B cell (primary cell): ENCODE measurements at regions of chrX and their contacts with region 1.

Region 1: GRCh38 chrX:37745354-37745753 is 34.5 kb upstream of the CYBB start:
- DNase-seq: peak; percentile 81
- ATAC-seq: peak; percentile 75
- H3K4me3 ChIP-seq: no peak overlapping the region
- H3K4me3 Mint-ChIP-seq: peak overlapping the region; percentile 67
- H3K27ac ChIP-seq: peak overlapping the region; percentile 50 to 70
- H3K27ac Mint-ChIP-seq: peak overlapping the region; percentile 88
- H3K4me1 ChIP-seq: peaks cover 20 to 24% of the 10 kb centered on the region in 2 donors
- H3K4me1 Mint-ChIP-seq: peaks cover 21% of the 10 kb centered on the region
- H3K27me3 ChIP-seq: no peaks in the 10 kb centered on the region
- H3K27me3 Mint-ChIP-seq: no peaks in the 10 kb centered on the region
- CTCF ChIP-seq: peak; percentile 73

Region 2: GRCh38 chrX:37441377-37441776 is 304.0 kb before region 1 on chrX:
- CTCF ChIA-PET with region 1: no interaction called
- POLR2A ChIA-PET with region 1: no interaction called
- intact Hi-C with region 1: no loop called
- DNase-seq: no peak
- ATAC-seq: no peak
- H3K4me3 ChIP-seq: no peak overlapping the region
- H3K4me3 Mint-ChIP-seq: no peak overlapping the region
- H3K27ac ChIP-seq: no peak overlapping the region
- H3K27ac Mint-ChIP-seq: no peak overlapping the region
- H3K4me1 ChIP-seq: no peaks in the 10 kb centered on the region
- H3K4me1 Mint-ChIP-seq: no peaks in the 10 kb centered on the region
- H3K27me3 ChIP-seq: no peaks in the 10 kb centered on the region
- H3K27me3 Mint-ChIP-seq: no peaks in the 10 kb centered on the region
- CTCF ChIP-seq: no peak

Region 3: DNA sequence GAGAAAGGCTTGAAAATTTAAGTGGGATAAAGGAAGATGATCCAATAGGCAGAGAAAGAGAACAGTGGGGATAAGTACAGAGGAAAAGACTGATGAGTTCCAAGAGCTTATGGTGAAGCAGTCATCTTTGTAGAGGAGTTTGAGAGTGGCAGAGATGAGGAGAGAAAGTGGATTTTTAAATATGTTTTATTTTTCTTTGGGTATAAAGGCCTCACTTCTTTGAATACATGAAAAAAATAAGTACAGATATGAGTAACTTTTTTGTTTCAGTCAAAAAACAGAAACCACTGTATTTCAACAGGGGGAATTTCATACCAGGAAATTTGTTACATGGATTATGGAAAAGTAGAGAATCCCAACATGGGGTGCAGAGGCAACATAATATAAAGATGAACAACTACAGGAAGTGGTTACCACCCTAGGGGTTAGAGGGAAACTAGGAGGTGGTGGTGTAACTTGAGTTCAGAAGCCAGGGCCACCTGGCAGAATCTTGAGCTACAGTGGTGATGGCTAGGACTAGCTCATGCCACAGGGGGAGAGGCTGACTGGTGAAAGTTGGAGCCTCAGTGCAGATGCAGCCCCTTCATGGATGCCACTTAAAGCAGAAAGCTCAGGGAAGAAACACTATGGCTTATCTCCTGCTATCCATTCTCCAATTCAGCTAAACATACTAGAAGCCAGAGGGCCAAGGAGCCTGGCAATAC is 31.1 kb after region 1 on chrX:
- CTCF ChIA-PET with region 1: interaction called, 65 read pairs
- POLR2A ChIA-PET with region 1: interaction called, 9 read pairs
- intact Hi-C with region 1: no loop called
- DNase-seq: peak; percentile 50
- ATAC-seq: peak; percentile 66
- H3K4me3 ChIP-seq: peak overlapping the region in 1 of 5 experiments; percentile 9
- H3K4me3 Mint-ChIP-seq: peak overlapping the region; percentile 60
- H3K27ac ChIP-seq: peak overlapping the region; percentile 84
- H3K27ac Mint-ChIP-seq: peak overlapping the region; percentile 89
- H3K4me1 ChIP-seq: peaks cover 29 to 36% of the 10 kb centered on the region in 2 donors
- H3K4me1 Mint-ChIP-seq: peaks cover 34% of the 10 kb centered on the region
- H3K27me3 ChIP-seq: no peaks in the 10 kb centered on the region
- H3K27me3 Mint-ChIP-seq: no peaks in the 10 kb centered on the region
- CTCF ChIP-seq: no peak

Region 4: GRCh38 chrX:37796805-37797204 is 51.5 kb after region 1 on chrX:
- CTCF ChIA-PET with region 1: interaction called, 23 read pairs
- POLR2A ChIA-PET with region 1: no interaction called
- intact Hi-C with region 1: no loop called
- DNase-seq: peak; percentile 76
- ATAC-seq: peak; percentile 90
- H3K4me3 ChIP-seq: peak overlapping the region in 1 of 5 experiments; percentile 21
- H3K4me3 Mint-ChIP-seq: peak overlapping the region; percentile 42
- H3K27ac ChIP-seq: peak overlapping the region in 1 of 2 donors; percentile 61
- H3K27ac Mint-ChIP-seq: peak overlapping the region; percentile 76
- H3K4me1 ChIP-seq: peaks cover 53 to 60% of the 10 kb centered on the region in 2 donors
- H3K4me1 Mint-ChIP-seq: peaks cover 67% of the 10 kb centered on the region
- H3K27me3 ChIP-seq: no peaks in the 10 kb centered on the region
- H3K27me3 Mint-ChIP-seq: no peaks in the 10 kb centered on the region
- CTCF ChIP-seq: no peak

Region 5: DNA sequence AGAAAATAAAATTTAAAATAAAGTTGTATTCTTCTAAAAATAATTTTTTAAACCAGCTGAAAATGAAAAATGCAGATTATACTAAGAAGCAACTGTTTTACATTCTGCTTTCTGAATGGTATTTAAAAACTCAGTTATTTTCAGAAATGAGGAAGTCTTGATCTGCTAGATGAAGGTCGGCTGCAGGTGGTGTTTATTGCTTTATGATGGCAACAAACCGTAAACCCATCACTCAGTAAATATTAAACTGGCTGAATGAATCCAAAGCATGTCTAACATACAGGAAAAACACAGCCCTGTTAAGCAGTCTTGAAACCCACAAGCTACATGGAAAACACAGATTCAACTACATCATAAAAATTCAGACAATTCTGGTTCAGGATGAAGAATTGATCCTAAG is 72.7 kb after region 1 on chrX:
- CTCF ChIA-PET with region 1: interaction called, 279 read pairs
- POLR2A ChIA-PET with region 1: interaction called, 18 read pairs
- intact Hi-C with region 1: no loop called
- DNase-seq: peak; percentile 67
- ATAC-seq: peak; percentile 66
- H3K4me3 ChIP-seq: peak overlapping the region; percentile 35 to 53 (median 44)
- H3K4me3 Mint-ChIP-seq: peak overlapping the region; percentile 86
- H3K27ac ChIP-seq: peak overlapping the region; percentile 89 to 90
- H3K27ac Mint-ChIP-seq: peak overlapping the region; percentile 99
- H3K4me1 ChIP-seq: peaks cover 53 to 58% of the 10 kb centered on the region in 2 donors
- H3K4me1 Mint-ChIP-seq: peaks cover 73% of the 10 kb centered on the region
- H3K27me3 ChIP-seq: no peaks in the 10 kb centered on the region
- H3K27me3 Mint-ChIP-seq: no peaks in the 10 kb centered on the region
- CTCF ChIP-seq: no peak

Region 6: GRCh38 chrX:37830371-37830770 is 85.0 kb after region 1 on chrX:
- CTCF ChIA-PET with region 1: interaction called, 279 read pairs
- POLR2A ChIA-PET with region 1: interaction called, 18 read pairs
- intact Hi-C with region 1: loop called (anchors 1 kb)
- DNase-seq: no peak
- ATAC-seq: no peak
- H3K4me3 ChIP-seq: no peak overlapping the region
- H3K4me3 Mint-ChIP-seq: no peak overlapping the region
- H3K27ac ChIP-seq: no peak overlapping the region
- H3K27ac Mint-ChIP-seq: no peak overlapping the region
- H3K4me1 ChIP-seq: peaks cover under 1 to 6% of the 10 kb centered on the region in 2 donors
- H3K4me1 Mint-ChIP-seq: peaks cover 13% of the 10 kb centered on the region
- H3K27me3 ChIP-seq: peaks cover 0 to 2% (median 0%) of the 10 kb centered on the region in 4 experiments
- H3K27me3 Mint-ChIP-seq: no peaks in the 10 kb centered on the region
- CTCF ChIP-seq: no peak

Region 7: GRCh38 chrX:37905436-37906147 is 160.2 kb after region 1 on chrX:
- CTCF ChIA-PET with region 1: no interaction called
- POLR2A ChIA-PET with region 1: no interaction called
- intact Hi-C with region 1: no loop called
- DNase-seq: peak; percentile 2
- ATAC-seq: no peak
- H3K4me3 ChIP-seq: no peak overlapping the region
- H3K4me3 Mint-ChIP-seq: no peak overlapping the region
- H3K27ac ChIP-seq: no peak overlapping the region
- H3K27ac Mint-ChIP-seq: no peak overlapping the region
- H3K4me1 ChIP-seq: no peaks in the 10 kb centered on the region
- H3K4me1 Mint-ChIP-seq: no peaks in the 10 kb centered on the region
- H3K27me3 ChIP-seq: peaks cover 0 to 7% (median 4%) of the 10 kb centered on the region in 4 experiments
- H3K27me3 Mint-ChIP-seq: peaks cover 28% of the 10 kb centered on the region
- CTCF ChIP-seq: no peak

Region 8: DNA sequence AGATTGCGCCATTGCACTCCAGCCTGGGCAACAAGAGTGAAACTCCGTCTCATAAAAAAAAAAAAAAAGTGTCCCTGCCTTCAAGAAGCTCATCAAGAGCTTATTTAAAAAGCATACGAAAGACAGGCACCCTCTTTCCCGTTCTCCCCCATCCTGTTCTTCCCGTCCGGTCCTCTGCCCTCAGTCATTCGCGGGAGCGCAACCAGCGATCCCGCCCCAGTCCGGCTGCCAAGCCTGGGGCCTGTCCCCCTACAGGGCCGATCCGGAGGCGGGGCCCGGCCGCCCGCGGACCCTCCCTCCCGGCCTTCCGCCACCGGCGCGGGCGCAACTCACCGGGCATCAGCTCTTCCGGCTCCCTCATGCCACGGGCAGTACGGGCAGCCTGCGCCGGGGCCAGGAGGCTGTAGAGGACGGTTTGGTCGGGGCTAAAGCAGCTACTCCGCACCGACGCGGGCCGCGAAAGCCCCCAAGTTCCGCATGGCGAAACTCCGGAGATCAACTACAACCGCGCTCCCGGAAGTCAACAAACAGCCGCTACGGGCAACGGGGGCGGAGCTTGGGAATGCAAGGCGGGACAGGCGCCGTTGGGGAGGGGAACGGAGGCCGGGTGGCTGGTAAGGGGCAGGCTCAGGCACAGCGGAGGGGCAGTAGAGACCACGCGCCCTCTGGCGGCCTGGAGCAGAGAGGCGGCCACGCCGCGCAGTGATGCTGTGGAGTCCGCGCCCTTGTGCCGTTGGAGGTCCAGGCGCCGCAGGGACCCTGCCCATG is 581.8 kb after region 1 on chrX and contains the start of gene RPGR:
- CTCF ChIA-PET with region 1: interaction called, 11 read pairs
- POLR2A ChIA-PET with region 1: no interaction called
- intact Hi-C with region 1: no loop called
- DNase-seq: peak; percentile 94
- ATAC-seq: peak; percentile 96
- H3K4me3 ChIP-seq: peak within 1 kb of the TSS; percentile 51 to 65 (median 62)
- H3K4me3 Mint-ChIP-seq: peak within 1 kb of the TSS; percentile 95
- H3K27ac ChIP-seq: peak within 1 kb of the TSS; percentile 77 to 99
- H3K27ac Mint-ChIP-seq: peak within 1 kb of the TSS; percentile 99
- H3K4me1 ChIP-seq: peaks cover 0 to 11% of the 10 kb centered on the region in 2 donors
- H3K4me1 Mint-ChIP-seq: peaks cover 19% of the 10 kb centered on the region
- H3K27me3 ChIP-seq: no peaks in the 10 kb centered on the region
- H3K27me3 Mint-ChIP-seq: no peaks in the 10 kb centered on the region
- CTCF ChIP-seq: peak; percentile 77
- total RNA-seq, gene RPGR: 26.3 and 26.8 TPM in 2 replicates